A549 (cell line): ENCODE measurements at regions of chr9 and their contacts with region 1.

Region 1: GRCh38 chr9:72203205-72203803 is 54.1 kb downstream of the GDA start:
- DNase-seq: peak; percentile 64 to 70
- ATAC-seq: peak; percentile 98 to 99
- H3K4me3 ChIP-seq: no peak overlapping the region
- H3K27ac ChIP-seq: no peak overlapping the region
- H3K4me1 ChIP-seq: peaks cover 6% of the 10 kb centered on the region; the same call in 2 of the 3 replicates
- CTCF ChIP-seq: peak; percentile 73
- EP300 ChIP-seq: no peak
- POLR2A ChIP-seq: no peak
- RAD21 ChIP-seq: peak; percentile 73 to 81

Region 2: GRCh38 chr9:72220582-72220981 is 17.3 kb after region 1 on chr9:
- CTCF ChIA-PET with region 1: interaction called, 10 read pairs
- POLR2A ChIA-PET with region 1: no interaction called
- DNase-seq: no peak
- ATAC-seq: peak in 1 of 2 experiments; percentile 30; a peak in 2 of 6 replicates
- H3K4me3 ChIP-seq: no peak overlapping the region
- H3K27ac ChIP-seq: no peak overlapping the region
- H3K4me1 ChIP-seq: 0 out of 3 replicates have a peak, but pooled peaks cover 5% of the 10 kb centered on the region
- CTCF ChIP-seq: no peak
- EP300 ChIP-seq: no peak
- POLR2A ChIP-seq: no peak
- RAD21 ChIP-seq: no peak

Region 3: DNA sequence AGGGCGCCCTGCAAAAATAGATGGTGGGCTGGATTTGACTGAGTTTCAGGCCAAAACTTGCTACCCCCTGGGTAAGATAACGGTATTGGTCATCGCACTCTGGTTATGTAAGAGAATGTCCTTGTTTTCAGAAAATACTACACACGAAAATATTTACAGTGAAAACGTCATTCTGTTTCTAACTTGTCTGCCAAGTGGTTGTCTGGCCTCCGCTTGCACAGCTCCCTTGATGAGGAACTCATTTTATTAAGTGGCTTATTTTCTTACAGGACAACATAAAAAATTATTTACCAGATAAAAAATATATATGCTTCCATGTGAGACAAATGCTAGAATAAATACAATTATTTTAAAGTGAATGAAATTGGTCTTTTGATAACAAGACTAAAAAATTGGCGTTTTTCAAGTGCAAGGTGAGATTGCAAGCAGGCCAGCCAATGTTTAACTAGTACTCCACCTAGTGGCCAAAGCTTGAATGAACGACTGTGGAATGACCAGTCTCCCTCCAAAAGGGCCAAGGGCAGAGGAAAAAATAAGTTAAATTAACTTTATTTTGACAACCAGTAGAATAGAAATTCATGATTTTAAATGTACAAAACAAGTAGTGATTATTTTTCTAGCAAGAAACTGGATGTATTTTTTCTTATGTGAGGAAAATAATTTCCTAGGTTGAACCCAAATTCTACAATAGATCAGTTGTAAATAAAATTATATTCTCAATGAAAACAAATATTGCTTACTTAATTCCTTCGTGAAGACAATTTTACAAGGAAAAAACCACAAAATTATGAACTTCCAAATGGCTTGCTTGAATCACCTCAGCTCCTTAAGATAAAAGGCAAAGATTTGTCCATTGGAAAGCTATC is 68.5 kb after region 1 on chr9:
- CTCF ChIA-PET with region 1: interaction called, 37 read pairs
- POLR2A ChIA-PET with region 1: interaction called, 4 read pairs
- DNase-seq: peak; percentile 64 to 76
- ATAC-seq: peak; percentile 76 to 90; a peak in 4 of 6 replicates
- H3K4me3 ChIP-seq: no peak overlapping the region
- H3K27ac ChIP-seq: no peak overlapping the region
- H3K4me1 ChIP-seq: no peaks in the 10 kb centered on the region
- CTCF ChIP-seq: peak; percentile 89
- EP300 ChIP-seq: no peak
- POLR2A ChIP-seq: no peak
- RAD21 ChIP-seq: peak; percentile 83 to 89